ENCODE measurements at regions of chr16 and their contacts with region 1.

Region 1: GRCh38 chr16:22232277-22233042 is 26.4 kb downstream of the EEF2K start:
- DNase-seq: peak; percentile 92 to 94
- H3K4me3 ChIP-seq: peak overlapping the region; percentile 7; the same call in 1 of the 2 replicates
- H3K27ac ChIP-seq: peak overlapping the region; percentile 79
- H3K4me1 ChIP-seq: peaks cover 34% of the 10 kb centered on the region
- H3K27me3 ChIP-seq: no peaks in the 10 kb centered on the region
- CTCF ChIP-seq: no peak

Region 2: DNA sequence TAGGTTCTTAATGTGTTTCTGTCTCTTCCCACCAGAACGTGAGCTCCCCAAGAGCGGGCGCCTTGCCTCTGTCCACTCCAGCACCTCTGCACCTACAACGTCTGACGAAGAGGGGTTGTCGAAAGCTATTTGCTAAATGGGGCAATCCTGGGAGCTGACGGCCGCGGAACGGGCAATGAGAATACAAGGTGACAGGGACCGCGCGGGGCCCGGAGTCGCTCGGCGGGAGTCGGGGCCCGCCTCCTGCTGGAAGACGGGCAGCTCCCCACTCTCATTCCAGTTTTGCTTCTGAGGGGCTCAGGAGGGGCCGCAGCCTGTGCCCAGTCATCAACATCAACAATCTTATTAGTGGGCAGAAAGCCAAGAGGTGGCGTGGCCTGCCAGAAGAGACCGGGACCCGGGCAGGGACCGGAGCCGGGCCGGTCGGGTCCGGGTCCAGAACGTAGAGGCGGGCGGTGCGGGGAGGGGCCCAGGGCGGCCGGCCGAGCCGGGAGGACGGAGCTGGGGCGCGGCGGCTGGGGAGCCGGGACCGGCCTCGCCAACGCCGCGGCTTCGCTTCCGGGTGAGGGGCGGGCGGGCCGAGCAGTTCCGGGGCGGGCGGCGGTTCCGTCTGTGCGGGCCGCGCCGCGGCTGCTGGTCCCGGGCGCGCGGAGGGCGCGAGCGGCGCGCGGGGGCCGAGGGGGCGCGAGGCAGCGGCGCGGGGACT is 224.8 kb before region 1 on chr16 and contains the start of gene MOSMO:
- CTCF ChIA-PET with region 1: no interaction called
- POLR2A ChIA-PET with region 1: interaction called, 11 read pairs
- intact Hi-C with region 1: no loop called
- DNase-seq: peak; percentile 66 to 70
- H3K4me3 ChIP-seq: peak within 1 kb of the TSS; percentile 100
- H3K27ac ChIP-seq: peak within 1 kb of the TSS; percentile 54
- H3K4me1 ChIP-seq: peaks cover 26% of the 10 kb centered on the region
- H3K27me3 ChIP-seq: no peaks in the 10 kb centered on the region
- CTCF ChIP-seq: 0 out of 2 replicates have a peak, but pooled peaks have one; percentile 21
- total RNA-seq, gene MOSMO: 20.1 and 24.2 TPM in 2 replicates

Region 3: DNA sequence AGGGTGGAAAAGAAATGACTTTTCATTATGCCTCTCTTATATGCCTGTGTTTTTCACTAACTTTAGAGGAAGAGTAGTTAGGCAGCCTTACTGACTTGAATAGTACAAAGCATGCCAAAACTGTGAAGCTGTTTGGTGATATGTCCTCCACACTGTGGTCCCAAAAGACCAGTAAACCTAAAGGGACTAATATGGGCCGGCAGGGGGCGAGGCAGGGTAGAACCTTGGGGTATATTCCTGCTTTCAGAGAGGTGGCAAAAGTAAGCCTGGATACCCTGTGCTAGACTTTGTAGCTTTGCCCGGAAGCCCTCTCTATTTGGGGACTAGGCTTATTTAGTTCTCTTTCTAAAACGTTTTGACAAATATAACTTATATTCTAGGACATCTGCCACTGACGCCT is 176.6 kb before region 1 on chr16:
- CTCF ChIA-PET with region 1: no interaction called
- POLR2A ChIA-PET with region 1: no interaction called
- intact Hi-C with region 1: no loop called
- DNase-seq: no peak
- H3K4me3 ChIP-seq: no peak overlapping the region
- H3K27ac ChIP-seq: no peak overlapping the region
- H3K4me1 ChIP-seq: peaks cover 6% of the 10 kb centered on the region
- H3K27me3 ChIP-seq: no peaks in the 10 kb centered on the region
- CTCF ChIP-seq: no peak

Region 4: DNA sequence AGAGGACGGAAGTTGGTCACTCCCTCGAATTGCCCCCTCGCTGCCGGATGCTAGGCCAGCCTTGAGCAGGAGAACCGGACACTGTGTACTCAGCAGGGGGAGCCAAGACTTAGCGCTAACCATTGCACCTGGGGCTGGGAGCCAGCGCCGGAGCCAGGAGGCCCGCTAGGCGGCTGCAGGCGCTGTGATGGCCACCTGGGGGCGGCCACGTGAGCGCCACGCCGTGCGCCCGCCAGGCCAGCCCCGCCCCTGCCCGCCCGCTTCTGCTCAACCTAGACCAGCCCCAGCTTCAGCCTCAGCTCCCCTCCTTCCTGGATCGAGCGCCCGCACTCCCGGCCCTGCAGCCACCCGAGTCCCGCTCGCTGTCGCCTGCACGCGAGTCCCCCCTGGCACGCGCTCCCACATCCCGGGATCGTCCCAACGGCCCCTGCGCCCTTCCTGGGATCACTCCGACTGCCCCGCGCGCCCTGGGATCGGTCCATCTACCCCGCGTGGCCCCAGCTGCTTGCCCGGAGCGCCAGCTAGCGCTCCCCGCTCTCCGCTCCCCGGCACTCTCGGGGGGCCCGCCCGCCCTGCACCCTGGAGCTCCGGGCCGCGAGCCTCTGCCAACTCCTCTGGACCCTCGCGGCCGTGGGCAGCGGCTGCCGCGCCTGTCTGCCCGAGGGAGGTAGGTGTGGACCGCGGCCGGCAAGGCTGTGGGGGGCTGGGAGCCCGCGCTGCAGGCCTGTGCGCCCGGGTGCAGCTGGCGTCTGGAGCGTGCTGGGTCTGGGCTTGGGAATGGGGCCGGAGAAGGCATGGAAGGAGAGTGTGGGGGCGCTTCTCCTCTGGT is 26.2 kb before region 1 on chr16 and contains the start of gene EEF2K:
- CTCF ChIA-PET with region 1: no interaction called
- POLR2A ChIA-PET with region 1: no interaction called
- intact Hi-C with region 1: loop called (anchors 1 kb)
- DNase-seq: peak; percentile 88 to 97
- H3K4me3 ChIP-seq: peak within 1 kb of the TSS; percentile 74
- H3K27ac ChIP-seq: peak within 1 kb of the TSS; percentile 73
- H3K4me1 ChIP-seq: peaks cover 25% of the 10 kb centered on the region
- H3K27me3 ChIP-seq: no peaks in the 10 kb centered on the region
- CTCF ChIP-seq: peak; percentile 68
- total RNA-seq, gene EEF2K: 29.8 and 34.7 TPM in 2 replicates

Region 5: GRCh38 chr16:22321339-22322001 is 89.0 kb after region 1 on chr16:
- CTCF ChIA-PET with region 1: interaction called, 5 read pairs
- POLR2A ChIA-PET with region 1: interaction called, 21 read pairs
- intact Hi-C with region 1: no loop called
- DNase-seq: peak; percentile 54 to 59
- H3K4me3 ChIP-seq: no peak overlapping the region
- H3K27ac ChIP-seq: no peak overlapping the region
- H3K4me1 ChIP-seq: no peaks in the 10 kb centered on the region
- H3K27me3 ChIP-seq: no peaks in the 10 kb centered on the region
- CTCF ChIP-seq: peak; percentile 94

Region 6: DNA sequence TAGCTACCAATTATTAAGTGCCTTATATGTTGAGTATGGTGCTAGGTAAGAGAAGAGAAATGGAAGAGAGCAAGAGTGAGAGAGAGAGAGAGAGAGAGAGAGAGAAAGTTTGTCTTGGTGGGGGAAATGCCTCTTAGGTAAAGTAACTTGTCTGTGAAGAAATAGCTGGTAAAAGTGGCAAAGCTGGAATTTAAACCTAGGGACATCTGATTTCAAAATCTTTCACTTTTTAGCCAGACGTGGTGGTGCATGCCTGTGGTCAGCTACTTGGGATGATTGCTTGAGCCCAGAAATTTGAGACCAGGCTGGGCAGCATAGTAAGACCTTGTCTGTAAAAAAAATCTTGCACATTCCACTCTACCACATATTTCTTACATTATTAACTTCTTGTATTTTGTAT is 165.0 kb after region 1 on chr16:
- CTCF ChIA-PET with region 1: no interaction called
- POLR2A ChIA-PET with region 1: interaction called, 15 read pairs
- intact Hi-C with region 1: no loop called
- DNase-seq: peak; percentile 84 to 96
- H3K4me3 ChIP-seq: no peak overlapping the region
- H3K27ac ChIP-seq: peak overlapping the region; percentile 55
- H3K4me1 ChIP-seq: peaks cover 51% of the 10 kb centered on the region
- H3K27me3 ChIP-seq: no peaks in the 10 kb centered on the region
- CTCF ChIP-seq: no peak; the same call in 1 of the 2 replicates